ENCODE measurements at regions of chr6 and their contacts with region 1.

Region 1: GRCh38 chr6:152696522-152696921 is 1.2 kb upstream of the MYCT1 start:
- DNase-seq: no peak

Region 2: GRCh38 chr6:152018876-152019275 is 677.6 kb before region 1 on chr6:
- intact Hi-C with region 1: no loop called
- DNase-seq: no peak

Region 3: GRCh38 chr6:152636609-152637295 is 59.8 kb before region 1 on chr6:
- intact Hi-C with region 1: loop called (anchors 5 kb)
- DNase-seq: peak; percentile 86

Measured in cardiac septum (tissue), 1 donor.